Activated B cell treated with CpG ODN at 0.5 μM for 24 hours (primary cell): ENCODE measurements at regions of chr20 and their contacts with region 1.

Region 1: DNA sequence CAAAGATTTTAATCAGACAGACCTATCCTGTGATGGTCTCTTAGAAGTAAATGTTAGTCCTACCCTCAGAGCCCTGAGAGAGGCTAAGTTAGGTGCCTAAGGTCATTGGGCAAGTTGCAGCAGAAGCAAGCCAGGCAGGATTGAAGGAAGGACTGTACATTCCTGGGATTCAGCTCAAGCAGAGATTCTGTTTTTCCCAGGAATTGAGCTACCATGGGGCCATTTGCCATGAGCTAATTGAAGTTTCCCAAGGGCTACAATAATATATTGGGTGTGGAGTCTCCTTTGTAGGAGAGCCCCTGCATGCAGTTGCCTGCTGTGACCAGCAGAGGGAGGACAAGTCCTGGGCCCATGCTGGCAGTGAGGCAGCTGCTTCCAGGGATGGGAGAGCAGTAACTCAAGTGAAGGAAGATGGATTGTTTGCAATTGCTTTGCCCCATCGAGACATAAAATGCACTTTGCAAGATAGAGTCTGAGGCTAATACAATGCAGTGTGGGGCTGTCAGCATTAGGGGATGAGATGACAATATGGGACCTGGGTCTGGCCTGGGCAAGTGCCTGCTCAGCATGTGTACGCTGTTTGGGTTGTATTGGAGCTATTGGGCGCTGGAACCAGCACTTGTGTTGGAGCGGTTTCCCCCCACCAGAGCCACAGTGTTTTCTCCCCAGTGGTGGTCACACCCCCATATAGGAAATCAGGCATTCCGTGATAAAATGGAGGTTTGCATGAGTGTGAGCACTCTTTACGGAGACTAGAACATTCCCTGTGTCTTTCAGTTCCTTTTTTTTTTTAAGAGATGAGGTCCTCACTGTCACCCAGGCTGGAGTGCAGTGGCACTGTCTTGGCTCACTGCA is 27.9 kb downstream of the DNMT3B start:
- DNase-seq: peak; percentile 46
- ATAC-seq: peak; percentile 57
- H3K4me3 Mint-ChIP-seq: no peak overlapping the region
- H3K27ac Mint-ChIP-seq: no peak overlapping the region
- H3K4me1 Mint-ChIP-seq: peaks cover 37% of the 10 kb centered on the region
- H3K27me3 Mint-ChIP-seq: no peaks in the 10 kb centered on the region
- CTCF ChIP-seq: peak; percentile 45

Region 2: GRCh38 chr20:32762149-32762753 is 27.9 kb before region 1 on chr20 and contains the start of gene DNMT3B:
- CTCF ChIA-PET with region 1: no interaction called
- POLR2A ChIA-PET with region 1: no interaction called
- intact Hi-C with region 1: no loop called
- DNase-seq: peak; percentile 81
- ATAC-seq: peak; percentile 86
- H3K4me3 Mint-ChIP-seq: peak within 1 kb of the TSS; percentile 86
- H3K27ac Mint-ChIP-seq: no peak within 1 kb of the TSS
- H3K4me1 Mint-ChIP-seq: peaks cover 17% of the 10 kb centered on the region
- H3K27me3 Mint-ChIP-seq: peaks cover 2% of the 10 kb centered on the region
- CTCF ChIP-seq: no peak
- total RNA-seq, gene DNMT3B: 0.20 and 0.32 TPM in 2 replicates

Region 3: GRCh38 chr20:32819992-32820710 is 30.0 kb after region 1 on chr20:
- CTCF ChIA-PET with region 1: interaction called, 5 read pairs
- POLR2A ChIA-PET with region 1: interaction called, 13 read pairs
- intact Hi-C with region 1: loop called (anchors 1 kb)
- DNase-seq: no peak
- ATAC-seq: peak; percentile 74
- H3K4me3 Mint-ChIP-seq: peak overlapping the region; percentile 96
- H3K27ac Mint-ChIP-seq: peak overlapping the region; percentile 91
- H3K4me1 Mint-ChIP-seq: peaks cover 44% of the 10 kb centered on the region
- H3K27me3 Mint-ChIP-seq: no peaks in the 10 kb centered on the region
- CTCF ChIP-seq: no peak

Region 4: GRCh38 chr20:33076662-33077372 is 286.7 kb after region 1 on chr20:
- CTCF ChIA-PET with region 1: no interaction called
- POLR2A ChIA-PET with region 1: no interaction called
- intact Hi-C with region 1: loop called (anchors 5 kb)
- DNase-seq: no peak
- ATAC-seq: peak; percentile 45
- H3K4me3 Mint-ChIP-seq: no peak overlapping the region
- H3K27ac Mint-ChIP-seq: no peak overlapping the region
- H3K4me1 Mint-ChIP-seq: no peaks in the 10 kb centered on the region
- H3K27me3 Mint-ChIP-seq: peaks cover 3% of the 10 kb centered on the region
- CTCF ChIP-seq: no peak

Region 5: DNA sequence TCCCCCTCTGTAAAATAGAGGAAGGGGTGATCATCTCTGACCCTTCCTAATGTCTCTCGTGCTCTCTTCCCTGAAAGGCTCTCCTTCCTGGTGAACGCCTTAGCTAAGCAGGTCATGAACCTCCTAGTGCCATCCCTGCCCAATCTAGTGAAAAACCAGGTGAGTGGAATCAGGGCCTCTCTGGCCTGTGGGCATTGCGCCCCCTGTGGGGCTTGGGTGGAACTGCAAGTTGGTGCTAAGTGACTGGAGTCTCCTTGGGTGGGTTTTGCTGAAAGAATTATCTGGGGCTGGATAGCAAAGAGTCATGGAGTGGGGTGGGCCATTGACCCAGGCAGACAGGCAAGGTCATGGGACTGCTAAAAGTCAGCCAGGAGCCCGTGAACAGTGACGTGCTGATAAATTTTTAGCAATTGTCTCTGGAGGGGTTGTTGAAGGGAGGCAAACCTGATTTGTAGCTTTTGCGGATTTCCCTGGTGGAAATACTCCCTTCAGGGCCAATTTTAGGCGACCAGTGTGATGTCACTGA is 501.8 kb after region 1 on chr20:
- CTCF ChIA-PET with region 1: interaction called, 3 read pairs
- POLR2A ChIA-PET with region 1: no interaction called
- intact Hi-C with region 1: loop called (anchors 1 kb)
- DNase-seq: peak; percentile 55
- ATAC-seq: peak; percentile 25
- H3K4me3 Mint-ChIP-seq: no peak overlapping the region
- H3K27ac Mint-ChIP-seq: no peak overlapping the region
- H3K4me1 Mint-ChIP-seq: no peaks in the 10 kb centered on the region
- H3K27me3 Mint-ChIP-seq: peaks cover 7% of the 10 kb centered on the region
- CTCF ChIP-seq: peak; percentile 50